Dorsolateral prefrontal cortex (tissue), 120 donors: ENCODE measurements at regions of chr14 and their contacts with region 1.

Region 1: GRCh38 chr14:95460647-95461478 is 55.6 kb downstream of the SYNE3 start:
- DNase-seq: peak; percentile 56 to 91 (median 83)
- H3K4me3 ChIP-seq: peak overlapping the region in 51 of 59 donors; percentile 1 to 61 (median 34)
- H3K27ac ChIP-seq: peak overlapping the region; percentile 49 to 97 (median 92)
- H3K27me3 ChIP-seq: no peaks in the 10 kb centered on the region
- CTCF ChIP-seq: peak in 2 of 56 donors; percentile 8 to 10

Region 2: DNA sequence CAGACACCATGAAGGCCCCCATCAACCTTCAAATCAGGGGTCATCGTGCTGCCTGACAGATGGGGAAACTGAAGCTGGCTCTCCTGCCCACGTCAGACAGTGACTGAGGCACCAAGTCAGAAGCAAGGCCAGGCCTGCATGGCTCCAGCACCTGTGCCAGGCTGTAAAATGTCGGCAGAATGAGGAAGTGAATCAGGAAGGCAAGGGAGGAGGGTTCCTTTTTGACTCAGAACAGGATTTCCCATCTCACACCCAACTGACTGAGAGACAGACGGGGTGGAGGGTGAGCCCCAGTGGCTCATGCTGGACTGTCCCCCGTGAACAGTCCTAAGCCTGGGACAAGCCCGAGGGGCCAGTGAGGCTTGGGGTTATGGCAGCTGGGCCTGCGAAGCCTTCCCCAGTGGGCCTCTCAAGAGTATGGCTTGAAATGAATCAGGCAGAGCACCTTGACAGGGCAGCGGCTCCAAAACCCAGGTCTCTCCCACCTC is 34.7 kb after region 1 on chr14:
- intact Hi-C with region 1: loop called (anchors 1 to 5 kb)
- DNase-seq: no peak
- H3K4me3 ChIP-seq: no peak overlapping the region
- H3K27ac ChIP-seq: peak overlapping the region in 40 of 59 donors; percentile 1 to 99 (median 64)
- H3K27me3 ChIP-seq: no peaks in the 10 kb centered on the region
- CTCF ChIP-seq: no peak

Region 3: GRCh38 chr14:95500772-95501401 is 40.0 kb after region 1 on chr14:
- intact Hi-C with region 1: loop called (anchors 1 to 5 kb)
- DNase-seq: peak in 6 of 10 donors; percentile 49 to 75 (median 62)
- H3K4me3 ChIP-seq: peak overlapping the region in 48 of 59 donors; percentile 11 to 64 (median 40)
- H3K27ac ChIP-seq: peak overlapping the region; percentile 42 to 99 (median 94)
- H3K27me3 ChIP-seq: no peaks in the 10 kb centered on the region
- CTCF ChIP-seq: peak in 1 of 56 donors; percentile 25

Region 4: GRCh38 chr14:95515596-95516552 is 55.0 kb after region 1 on chr14:
- intact Hi-C with region 1: loop called in 1 of 2 experiments (anchors 5 kb)
- DNase-seq: peak in 6 of 10 donors; percentile 54 to 82 (median 68)
- H3K4me3 ChIP-seq: peak overlapping the region; percentile 47 to 85 (median 74)
- H3K27ac ChIP-seq: peak overlapping the region in 57 of 59 donors; percentile 6 to 92 (median 80)
- H3K27me3 ChIP-seq: no peaks in the 10 kb centered on the region
- CTCF ChIP-seq: peak in 44 of 56 donors; percentile 12 to 56 (median 38)